Activated T-helper 1 cell treated with anti-CD3 and anti-CD28 coated beads, Interleukin-12 subunit alpha, Interleukin-12 subunit beta, Interleukin-2, Interleukin-4 antibody, amounts not matched to agents 30 ng/mL and 10 ng/mL and 1 ng/mL, durations not matched to agents 14 hours and 24 hours and 36 hours (primary cell): ENCODE measurements at regions of chr6 and their contacts with region 1.

Region 1: DNA sequence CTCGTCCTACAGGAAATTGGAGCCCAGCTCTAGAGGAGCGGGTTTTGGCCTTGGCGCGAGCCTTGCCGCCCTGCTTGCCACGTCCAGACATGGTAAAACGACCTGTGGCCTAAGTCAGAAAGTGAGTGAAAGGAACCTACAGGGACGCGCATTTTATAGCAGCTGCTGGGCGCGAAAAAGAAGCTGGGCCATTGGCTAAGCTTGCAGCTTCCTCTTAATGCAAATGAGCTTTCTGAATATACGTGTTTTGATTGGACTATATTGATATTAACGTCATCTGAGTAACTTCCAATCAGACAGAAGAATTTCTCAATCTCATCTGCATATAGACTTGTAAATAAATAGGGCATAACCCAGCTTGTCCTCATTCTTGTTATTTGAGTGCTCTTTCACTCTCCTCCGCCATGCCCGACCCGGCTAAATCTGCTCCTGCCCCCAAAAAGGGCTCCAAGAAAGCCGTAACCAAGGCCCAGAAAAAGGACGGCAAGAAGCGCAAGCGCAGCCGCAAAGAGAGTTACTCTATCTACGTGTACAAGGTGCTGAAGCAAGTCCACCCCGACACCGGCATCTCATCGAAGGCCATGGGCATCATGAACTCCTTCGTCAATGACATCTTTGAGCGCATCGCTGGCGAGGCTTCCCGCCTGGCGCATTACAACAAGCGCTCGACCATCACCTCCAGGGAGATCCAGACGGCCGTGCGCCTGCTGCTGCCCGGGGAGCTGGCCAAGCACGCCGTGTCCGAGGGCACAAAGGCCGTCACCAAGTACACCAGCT is 18.9 kb downstream of the OR2B2 start:
- DNase-seq: peak; percentile 93
- H3K4me3 Mint-ChIP-seq: no peak overlapping the region
- H3K27ac Mint-ChIP-seq: no peak overlapping the region
- H3K4me1 Mint-ChIP-seq: peaks cover 61% of the 10 kb centered on the region
- H3K27me3 Mint-ChIP-seq: no peaks in the 10 kb centered on the region

Region 2: DNA sequence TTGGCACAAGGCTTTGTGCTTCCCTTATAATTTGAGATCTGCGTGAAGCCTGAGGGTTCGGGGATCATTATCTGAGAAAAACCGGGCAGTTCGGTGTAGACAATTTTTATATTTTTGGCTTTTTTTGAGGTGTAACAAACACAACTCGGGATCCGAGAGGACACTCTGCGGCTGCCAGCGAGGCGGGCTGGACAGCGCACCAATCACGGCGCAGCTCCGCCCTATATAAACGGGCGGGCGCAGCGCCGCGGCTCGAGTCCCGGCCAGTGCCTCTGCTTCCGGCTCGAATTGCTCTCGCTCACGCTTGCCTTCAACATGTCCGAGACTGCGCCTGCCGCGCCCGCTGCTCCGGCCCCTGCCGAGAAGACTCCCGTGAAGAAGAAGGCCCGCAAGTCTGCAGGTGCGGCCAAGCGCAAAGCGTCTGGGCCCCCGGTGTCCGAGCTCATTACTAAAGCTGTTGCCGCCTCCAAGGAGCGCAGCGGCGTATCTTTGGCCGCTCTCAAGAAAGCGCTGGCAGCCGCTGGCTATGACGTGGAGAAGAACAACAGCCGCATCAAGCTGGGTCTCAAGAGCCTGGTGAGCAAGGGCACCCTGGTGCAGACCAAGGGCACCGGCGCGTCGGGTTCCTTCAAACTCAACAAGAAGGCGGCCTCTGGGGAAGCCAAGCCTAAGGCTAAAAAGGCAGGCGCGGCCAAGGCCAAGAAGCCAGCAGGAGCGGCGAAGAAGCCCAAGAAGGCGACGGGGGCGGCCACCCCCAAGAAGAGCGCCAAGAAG is 1737.0 kb before region 1 on chr6:
- intact Hi-C with region 1: loop called (anchors 2 kb)
- DNase-seq: peak; percentile 89
- H3K4me3 Mint-ChIP-seq: peak overlapping the region; percentile 91
- H3K27ac Mint-ChIP-seq: peak overlapping the region; percentile 95
- H3K4me1 Mint-ChIP-seq: peaks cover 56% of the 10 kb centered on the region
- H3K27me3 Mint-ChIP-seq: peaks cover 3% of the 10 kb centered on the region

Region 3: GRCh38 chr6:26553635-26554446 is 1339.4 kb before region 1 on chr6:
- intact Hi-C with region 1: loop called (anchors 5 kb)
- DNase-seq: peak; percentile 72
- H3K4me3 Mint-ChIP-seq: no peak overlapping the region
- H3K27ac Mint-ChIP-seq: no peak overlapping the region
- H3K4me1 Mint-ChIP-seq: peaks cover 18% of the 10 kb centered on the region
- H3K27me3 Mint-ChIP-seq: peaks cover 2% of the 10 kb centered on the region

Region 4: DNA sequence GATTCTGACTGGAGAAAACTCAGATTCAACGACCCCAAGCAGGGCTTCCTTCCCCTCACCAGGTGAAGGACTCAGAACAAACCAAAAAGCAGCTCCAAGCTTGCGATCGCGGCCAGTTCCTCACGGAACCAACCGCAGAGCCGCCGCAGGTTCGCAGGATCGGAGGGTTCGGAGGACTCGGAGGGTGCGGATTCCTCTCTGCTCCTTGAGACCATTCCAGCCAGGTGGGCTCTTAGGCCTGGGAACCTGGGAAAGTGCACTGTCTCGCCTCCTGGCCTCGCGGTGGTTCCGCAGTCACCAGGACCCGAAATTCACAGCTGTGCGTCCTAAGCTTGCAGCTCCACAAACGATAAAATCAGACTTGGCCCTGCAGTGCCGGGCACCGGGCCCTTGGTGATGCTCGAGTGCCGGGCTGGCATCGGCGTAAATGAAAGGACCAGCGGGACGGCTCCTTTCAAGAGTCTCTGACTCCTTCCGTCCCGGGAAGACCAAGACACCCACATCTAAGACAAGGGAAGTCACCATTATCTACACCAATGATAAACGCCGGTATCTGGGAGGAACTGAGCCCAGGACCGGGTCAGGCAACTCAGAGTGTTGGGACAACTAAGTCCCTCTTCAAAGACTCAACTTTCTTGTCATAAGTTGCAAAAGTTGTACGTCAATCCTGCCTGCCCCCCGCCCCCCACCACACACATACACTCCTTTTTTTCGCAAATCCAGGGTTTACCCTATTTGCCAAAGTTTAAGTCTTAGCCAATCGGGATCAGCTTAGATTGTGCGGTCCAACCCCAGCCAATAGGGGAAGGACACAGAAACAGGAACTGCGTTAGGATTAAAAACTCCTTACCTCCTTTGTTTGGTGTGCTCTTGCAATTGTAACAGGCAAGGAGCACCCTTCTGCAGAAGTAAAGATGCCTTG is 715.5 kb before region 1 on chr6:
- intact Hi-C with region 1: loop called (anchors 1 kb)
- DNase-seq: peak; percentile 66
- H3K4me3 Mint-ChIP-seq: peak overlapping the region; percentile 95
- H3K27ac Mint-ChIP-seq: peak overlapping the region; percentile 93
- H3K4me1 Mint-ChIP-seq: peaks cover 7% of the 10 kb centered on the region
- H3K27me3 Mint-ChIP-seq: peaks cover 36% of the 10 kb centered on the region

Region 5: GRCh38 chr6:27518881-27519795 is 374.1 kb before region 1 on chr6:
- intact Hi-C with region 1: loop called (anchors 1 kb)
- DNase-seq: peak; percentile 40
- H3K4me3 Mint-ChIP-seq: peak overlapping the region; percentile 89
- H3K27ac Mint-ChIP-seq: peak overlapping the region; percentile 86
- H3K4me1 Mint-ChIP-seq: peaks cover 16% of the 10 kb centered on the region
- H3K27me3 Mint-ChIP-seq: peaks cover 25% of the 10 kb centered on the region

Region 6: DNA sequence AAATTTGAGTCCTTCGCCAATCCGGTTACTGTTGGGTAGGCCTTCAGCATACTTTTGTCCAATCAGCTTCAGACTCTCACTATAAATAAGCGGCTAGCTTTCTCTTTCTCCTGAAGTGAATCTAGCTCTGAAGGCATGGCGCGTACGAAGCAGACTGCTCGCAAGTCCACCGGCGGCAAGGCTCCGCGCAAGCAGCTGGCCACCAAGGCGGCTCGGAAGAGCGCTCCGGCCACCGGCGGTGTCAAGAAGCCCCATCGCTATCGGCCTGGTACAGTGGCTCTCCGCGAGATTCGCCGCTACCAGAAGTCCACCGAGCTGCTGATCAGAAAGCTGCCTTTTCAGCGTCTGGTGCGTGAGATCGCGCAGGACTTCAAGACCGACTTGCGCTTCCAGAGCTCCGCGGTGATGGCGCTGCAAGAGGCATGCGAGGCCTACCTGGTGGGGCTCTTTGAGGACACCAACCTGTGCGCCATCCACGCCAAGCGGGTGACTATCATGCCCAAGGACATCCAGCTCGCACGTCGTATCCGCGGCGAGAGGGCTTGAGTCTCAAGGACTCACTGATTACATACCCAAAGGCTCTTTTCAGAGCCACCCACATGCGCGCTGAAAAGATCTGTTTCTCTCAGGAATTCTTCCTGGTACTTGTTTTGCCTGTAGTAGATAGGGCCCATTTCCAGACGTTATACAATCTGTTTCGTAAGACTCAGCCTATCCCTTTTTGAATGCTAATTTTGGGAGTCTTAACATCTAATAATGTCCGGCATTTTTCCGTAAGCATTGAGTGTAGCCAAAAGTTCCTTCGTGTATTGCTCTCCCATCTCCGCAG is 83.1 kb before region 1 on chr6:
- intact Hi-C with region 1: loop called (anchors 1 kb)
- DNase-seq: peak; percentile 83
- H3K4me3 Mint-ChIP-seq: peak overlapping the region; percentile 91
- H3K27ac Mint-ChIP-seq: peak overlapping the region; percentile 96
- H3K4me1 Mint-ChIP-seq: peaks cover 78% of the 10 kb centered on the region
- H3K27me3 Mint-ChIP-seq: no peaks in the 10 kb centered on the region

Region 7: DNA sequence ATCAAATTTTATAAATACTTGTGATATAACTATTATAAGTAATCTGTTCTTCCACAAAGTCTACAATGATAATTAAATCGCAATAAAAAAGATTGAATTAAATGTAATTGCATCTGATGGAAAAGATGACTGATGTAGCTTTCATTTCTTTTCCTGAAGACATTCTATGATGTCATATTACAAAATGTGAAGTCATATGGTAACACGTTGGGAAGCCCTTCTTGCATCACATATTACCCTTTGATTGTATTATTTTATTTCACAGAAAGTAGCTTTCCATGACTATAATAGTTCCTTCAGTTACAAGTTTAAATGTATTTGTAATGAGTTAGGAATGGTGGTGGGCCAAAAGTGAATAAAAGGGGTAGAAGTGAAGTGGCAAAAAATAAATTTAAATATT is 38.0 kb after region 1 on chr6:
- intact Hi-C with region 1: no loop called
- DNase-seq: no peak
- H3K4me3 Mint-ChIP-seq: no peak overlapping the region
- H3K27ac Mint-ChIP-seq: no peak overlapping the region
- H3K4me1 Mint-ChIP-seq: no peaks in the 10 kb centered on the region
- H3K27me3 Mint-ChIP-seq: peaks cover 12% of the 10 kb centered on the region

Region 8: DNA sequence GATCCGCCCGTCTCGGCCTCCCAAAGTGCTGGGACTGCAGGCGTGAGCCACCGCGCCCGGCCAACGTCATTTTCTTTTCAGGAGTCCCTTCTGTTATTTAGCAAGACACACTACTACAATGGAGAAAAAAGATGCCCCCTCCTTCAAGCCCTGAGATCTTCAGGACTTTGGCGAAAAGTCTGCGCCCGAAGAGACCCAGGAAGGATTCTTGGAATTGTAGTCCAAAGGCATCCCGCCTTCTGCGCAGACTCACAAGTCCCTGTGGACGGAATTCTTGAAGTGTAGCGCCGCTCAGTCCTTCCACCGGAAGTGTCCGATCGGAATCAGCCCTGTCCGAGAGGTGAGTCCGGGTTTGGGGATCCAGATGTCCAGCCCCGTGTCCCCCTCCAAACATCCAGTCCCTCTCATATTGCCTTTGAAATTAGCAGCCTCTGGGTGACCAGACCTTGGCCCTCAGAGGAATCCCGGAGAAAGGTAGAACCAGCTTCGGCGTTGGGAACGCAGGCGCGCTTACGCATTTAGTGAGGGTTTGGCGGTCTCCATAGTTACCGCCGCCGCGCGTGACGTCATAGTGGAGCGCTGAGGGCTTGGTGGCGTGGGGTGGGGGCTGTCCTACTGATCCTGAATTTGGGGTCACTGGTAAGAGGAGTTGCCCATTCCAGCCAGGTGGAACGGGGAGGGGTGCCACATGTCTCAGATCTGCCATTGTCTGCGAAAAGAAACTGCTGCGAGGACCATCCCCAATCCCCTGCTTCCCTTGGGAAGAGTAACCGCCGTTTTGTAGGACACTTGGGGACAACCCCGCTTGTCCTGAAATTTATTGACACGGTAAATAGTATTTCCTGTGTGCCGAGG is 187.6 kb after region 1 on chr6:
- intact Hi-C with region 1: loop called (anchors 2 kb)
- DNase-seq: peak; percentile 82
- H3K4me3 Mint-ChIP-seq: peak overlapping the region; percentile 96
- H3K27ac Mint-ChIP-seq: peak overlapping the region; percentile 96
- H3K4me1 Mint-ChIP-seq: peaks cover 21% of the 10 kb centered on the region
- H3K27me3 Mint-ChIP-seq: peaks cover 2% of the 10 kb centered on the region